ENCODE measurements at regions of chr5 and their contacts with region 1.

Region 1: GRCh38 chr5:79689541-79690466 is at the start of gene CMYA5:
- DNase-seq: no peak
- H3K4me3 ChIP-seq: peak within 1 kb of the TSS; percentile 52
- H3K27ac ChIP-seq: no peak within 1 kb of the TSS
- H3K27me3 ChIP-seq: no peaks in the 10 kb centered on the region
- CTCF ChIP-seq: no peak
- polyA plus RNA-seq, gene CMYA5: 0.89 TPM in 2 replicates

Region 2: GRCh38 chr5:79011219-79011836 is 678.5 kb before region 1 on chr5:
- CTCF ChIA-PET with region 1: interaction called, 11 read pairs
- POLR2A ChIA-PET with region 1: no interaction called
- DNase-seq: peak; percentile 8
- H3K4me3 ChIP-seq: no peak overlapping the region
- H3K27ac ChIP-seq: no peak overlapping the region
- H3K27me3 ChIP-seq: no peaks in the 10 kb centered on the region
- CTCF ChIP-seq: peak; percentile 30